ENCODE measurements at regions of chr2 and their contacts with region 1.

Region 1: GRCh38 chr2:226799181-226799975 is at the start of gene IRS1:
- DNase-seq: peak; percentile 66
- ATAC-seq: peak; percentile 65
- H3K4me3 ChIP-seq: peak within 1 kb of the TSS; percentile 59 to 72 (median 62)
- H3K27ac ChIP-seq: peak within 1 kb of the TSS; percentile 96
- H3K4me1 ChIP-seq: peaks cover 79% of the 10 kb centered on the region
- H3K27me3 ChIP-seq: no peaks in the 10 kb centered on the region
- CTCF ChIP-seq: no peak
- EP300 ChIP-seq: peak in 1 of 2 experiments; percentile 50; a peak in 2 of 4 replicates
- POLR2A ChIP-seq: no peak
- RAD21 ChIP-seq: peak; percentile 93
- total RNA-seq, gene IRS1: 7.9 and 8.7 TPM in 2 replicates

Region 2: DNA sequence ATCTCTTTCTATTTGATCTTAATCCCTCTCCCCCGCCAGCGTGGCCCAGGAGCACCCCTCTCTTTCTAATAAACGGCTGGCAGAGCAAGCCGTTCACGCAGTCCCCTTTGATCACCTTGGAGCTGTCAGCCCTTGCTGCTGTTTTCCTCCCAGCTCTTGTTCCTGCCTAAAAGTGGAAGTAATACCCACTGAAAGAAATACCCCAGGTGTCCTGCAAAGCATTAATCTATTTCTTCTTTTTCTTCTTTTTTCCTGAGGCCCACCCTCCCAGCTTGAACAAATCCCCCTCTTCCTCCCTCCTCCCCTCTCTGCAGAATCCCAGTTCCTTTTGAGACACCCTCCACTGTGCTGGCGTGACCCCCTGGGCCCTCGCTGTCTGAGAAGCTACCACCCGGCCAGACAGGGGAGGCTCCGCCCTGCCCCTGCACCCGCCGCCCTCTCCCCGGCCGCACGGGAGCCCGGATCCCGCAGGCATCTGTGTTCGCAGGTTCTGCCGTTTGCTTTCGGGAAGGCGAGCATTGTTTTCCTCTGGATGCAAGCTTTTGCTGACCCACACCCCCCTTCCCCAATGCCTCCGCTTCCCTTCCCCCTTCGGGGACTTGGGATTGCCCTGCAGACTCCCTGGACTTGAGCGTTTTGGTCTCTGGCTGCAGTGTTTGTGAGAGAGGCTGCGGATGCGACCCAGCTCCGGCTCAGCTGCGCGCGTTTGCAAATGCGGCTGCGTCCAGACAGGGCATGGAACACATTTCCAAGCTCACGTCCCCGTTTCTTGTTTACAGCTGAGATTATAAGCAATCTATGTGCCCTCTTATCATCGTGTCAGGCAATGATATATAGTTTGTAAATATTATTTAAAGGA is 768.4 kb before region 1 on chr2:
- CTCF ChIA-PET with region 1: no interaction called
- POLR2A ChIA-PET with region 1: interaction called, 4 read pairs
- in situ Hi-C with region 1: loop called (anchors 10 kb)
- intact Hi-C with region 1: loop called (anchors 1 kb)
- DNase-seq: peak; percentile 73
- ATAC-seq: peak; percentile 97
- H3K4me3 ChIP-seq: peak overlapping the region; percentile 58 to 78 (median 65)
- H3K27ac ChIP-seq: peak overlapping the region; percentile 72
- H3K4me1 ChIP-seq: peaks cover 38% of the 10 kb centered on the region
- H3K27me3 ChIP-seq: no peaks in the 10 kb centered on the region
- CTCF ChIP-seq: no peak
- EP300 ChIP-seq: peak in 1 of 2 experiments; percentile 56; a peak in 1 of 4 replicates
- POLR2A ChIP-seq: peak; percentile 53 to 85; a peak in 3 of 4 replicates
- RAD21 ChIP-seq: peak; percentile 13; the same call in 1 of the 2 replicates

Region 3: DNA sequence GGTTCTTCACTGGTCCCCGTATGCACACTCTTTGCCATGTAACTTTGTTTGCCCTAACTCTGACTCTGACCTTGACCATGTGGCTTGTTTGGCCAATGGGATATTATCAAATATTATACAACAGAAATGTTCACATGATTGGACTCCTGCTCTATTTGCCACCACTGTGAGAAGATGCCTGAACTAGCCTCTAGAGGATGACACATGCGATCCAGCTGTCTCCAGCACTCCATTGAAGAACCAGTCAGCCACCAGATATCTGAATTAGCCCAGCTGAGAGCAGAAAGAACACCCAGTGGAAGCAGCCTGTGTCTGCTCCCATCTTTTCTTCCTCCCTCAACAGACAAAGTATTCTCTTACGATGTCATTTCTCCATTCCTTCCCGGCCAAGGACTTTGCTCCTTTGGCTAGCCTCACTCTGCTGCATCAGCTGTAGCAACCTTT is 411.9 kb before region 1 on chr2:
- CTCF ChIA-PET with region 1: no interaction called
- POLR2A ChIA-PET with region 1: interaction called, 5 read pairs
- in situ Hi-C with region 1: no loop called
- intact Hi-C with region 1: loop called (anchors 5 kb)
- DNase-seq: peak; percentile 75
- ATAC-seq: peak; percentile 96
- H3K4me3 ChIP-seq: no peak overlapping the region
- H3K27ac ChIP-seq: no peak overlapping the region
- H3K4me1 ChIP-seq: peaks cover 19% of the 10 kb centered on the region
- H3K27me3 ChIP-seq: 0 out of 5 replicates have a peak, but pooled peaks cover 0 to 3% of the 10 kb centered on the region in 2 experiments
- CTCF ChIP-seq: 0 out of 2 replicates have a peak, but pooled peaks have one; percentile 14
- EP300 ChIP-seq: peak in 1 of 2 experiments; percentile 48; a peak in 1 of 4 replicates
- POLR2A ChIP-seq: no peak
- RAD21 ChIP-seq: 0 out of 2 replicates have a peak, but pooled peaks have one; percentile 26

Region 4: DNA sequence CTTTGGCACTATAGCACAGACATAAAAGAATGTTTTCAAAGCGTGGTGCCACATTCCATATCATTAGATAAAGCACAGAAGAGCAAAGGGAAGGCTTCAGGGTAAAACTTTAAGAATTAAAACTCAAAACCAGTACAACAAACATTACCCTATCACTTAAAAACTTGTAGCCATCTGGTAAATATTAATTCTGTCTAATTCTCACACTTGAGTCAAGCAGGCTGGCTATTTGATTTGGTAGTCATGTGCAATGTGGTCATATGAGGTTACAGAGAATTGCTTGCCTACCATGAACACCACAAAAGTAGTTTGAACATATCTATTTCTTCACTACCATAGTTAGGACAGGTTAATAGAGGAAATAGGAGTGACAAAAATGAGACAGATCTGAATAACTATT is 244.7 kb before region 1 on chr2:
- CTCF ChIA-PET with region 1: no interaction called
- POLR2A ChIA-PET with region 1: no interaction called
- in situ Hi-C with region 1: no loop called
- intact Hi-C with region 1: loop called (anchors 1 kb)
- DNase-seq: no peak
- ATAC-seq: no peak
- H3K4me3 ChIP-seq: no peak overlapping the region
- H3K27ac ChIP-seq: no peak overlapping the region
- H3K4me1 ChIP-seq: peaks cover 36% of the 10 kb centered on the region
- H3K27me3 ChIP-seq: no peaks in the 10 kb centered on the region
- CTCF ChIP-seq: no peak
- EP300 ChIP-seq: no peak
- POLR2A ChIP-seq: no peak
- RAD21 ChIP-seq: no peak

Region 5: DNA sequence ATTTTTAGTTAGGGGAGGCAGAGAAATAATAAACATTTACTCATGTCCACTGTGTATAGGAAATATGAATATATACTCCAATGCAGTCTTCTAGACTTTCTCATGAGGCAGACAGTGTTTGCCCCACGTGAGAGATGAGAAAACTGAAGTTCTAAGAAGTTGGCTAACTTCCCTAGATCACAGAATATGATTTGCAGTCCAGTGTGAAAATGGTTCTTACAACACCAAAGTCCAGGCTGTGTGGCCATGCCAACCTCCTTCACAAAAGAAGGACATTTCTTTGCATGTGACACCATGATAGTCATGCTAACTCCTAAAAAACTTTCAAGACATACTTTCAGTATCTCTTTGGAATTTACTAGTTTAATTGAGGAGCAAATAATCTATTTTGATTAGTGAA is 143.5 kb before region 1 on chr2:
- CTCF ChIA-PET with region 1: no interaction called
- POLR2A ChIA-PET with region 1: interaction called, 6 read pairs
- in situ Hi-C with region 1: no loop called
- intact Hi-C with region 1: loop called (anchors 2 kb)
- DNase-seq: no peak
- ATAC-seq: no peak
- H3K4me3 ChIP-seq: no peak overlapping the region
- H3K27ac ChIP-seq: no peak overlapping the region
- H3K4me1 ChIP-seq: peaks cover 94% of the 10 kb centered on the region
- H3K27me3 ChIP-seq: no peaks in the 10 kb centered on the region
- CTCF ChIP-seq: no peak
- EP300 ChIP-seq: no peak
- POLR2A ChIP-seq: no peak
- RAD21 ChIP-seq: no peak

Region 6: GRCh38 chr2:226673314-226673723 is 126.1 kb before region 1 on chr2:
- CTCF ChIA-PET with region 1: no interaction called
- POLR2A ChIA-PET with region 1: no interaction called
- in situ Hi-C with region 1: no loop called
- intact Hi-C with region 1: no loop called
- DNase-seq: no peak
- ATAC-seq: no peak
- H3K4me3 ChIP-seq: no peak overlapping the region
- H3K27ac ChIP-seq: no peak overlapping the region
- H3K4me1 ChIP-seq: peaks cover 24% of the 10 kb centered on the region
- H3K27me3 ChIP-seq: no peaks in the 10 kb centered on the region
- CTCF ChIP-seq: no peak
- EP300 ChIP-seq: no peak
- POLR2A ChIP-seq: no peak
- RAD21 ChIP-seq: no peak

Region 7: GRCh38 chr2:226835796-226836547 is 36.6 kb after region 1 on chr2 and contains the start of gene RHBDD1:
- CTCF ChIA-PET with region 1: no interaction called
- POLR2A ChIA-PET with region 1: interaction called, 15 read pairs
- in situ Hi-C with region 1: no loop called
- intact Hi-C with region 1: loop called (anchors 1 kb)
- DNase-seq: peak; percentile 62
- ATAC-seq: peak; percentile 93
- H3K4me3 ChIP-seq: peak within 1 kb of the TSS; percentile 68 to 84 (median 77)
- H3K27ac ChIP-seq: peak within 1 kb of the TSS; percentile 59
- H3K4me1 ChIP-seq: peaks cover 36% of the 10 kb centered on the region
- H3K27me3 ChIP-seq: no peaks in the 10 kb centered on the region
- CTCF ChIP-seq: no peak
- EP300 ChIP-seq: no peak
- POLR2A ChIP-seq: peak; percentile 63 to 77
- RAD21 ChIP-seq: peak; percentile 28; the same call in 1 of the 2 replicates
- total RNA-seq, gene RHBDD1: 8.2 and 8.8 TPM in 2 replicates

Region 8: GRCh38 chr2:226906163-226906693 is 106.8 kb after region 1 on chr2:
- CTCF ChIA-PET with region 1: no interaction called
- POLR2A ChIA-PET with region 1: no interaction called
- in situ Hi-C with region 1: no loop called
- intact Hi-C with region 1: no loop called
- DNase-seq: no peak
- ATAC-seq: no peak
- H3K4me3 ChIP-seq: no peak overlapping the region
- H3K27ac ChIP-seq: no peak overlapping the region
- H3K4me1 ChIP-seq: no peaks in the 10 kb centered on the region
- H3K27me3 ChIP-seq: no peaks in the 10 kb centered on the region
- CTCF ChIP-seq: no peak
- EP300 ChIP-seq: no peak
- POLR2A ChIP-seq: no peak
- RAD21 ChIP-seq: no peak